BJ (cell line): ENCODE measurements at regions of chr10 and their contacts with region 1.

Region 1: GRCh38 chr10:80144067-80144695 is 11.7 kb downstream of the PLAC9 start:
- DNase-seq: no peak
- H3K4me3 ChIP-seq: no peak overlapping the region
- H3K27me3 ChIP-seq: no peaks in the 10 kb centered on the region
- CTCF ChIP-seq: no peak

Region 2: DNA sequence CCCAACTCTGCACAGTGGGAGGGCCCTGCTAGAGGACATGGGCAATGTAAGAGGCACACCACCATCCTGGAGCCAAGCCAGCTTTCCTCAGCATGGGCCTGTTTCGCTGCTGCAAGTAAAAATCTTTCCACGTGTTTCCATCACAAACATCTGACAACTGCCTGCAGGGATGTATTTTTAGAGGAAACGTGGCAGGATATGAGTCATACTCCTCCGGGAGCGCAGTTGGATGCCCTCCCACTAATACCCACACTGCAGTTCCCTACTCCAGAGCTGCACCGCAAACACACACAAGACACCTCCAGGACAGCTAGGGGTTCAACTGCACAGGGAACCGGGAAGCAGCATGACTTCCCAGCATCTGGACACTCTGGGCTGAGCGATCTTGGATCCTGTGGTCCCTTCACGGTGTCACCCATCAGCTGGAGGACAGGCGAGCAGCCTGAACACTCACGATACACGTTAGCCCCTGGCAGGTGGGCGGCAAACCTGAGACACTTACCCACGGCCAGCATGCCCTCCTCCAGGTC is 14.5 kb after region 1 on chr10:
- CTCF ChIA-PET with region 1: interaction called, 15 read pairs
- POLR2A ChIA-PET with region 1: interaction called, 4 read pairs
- DNase-seq: peak; percentile 97
- H3K4me3 ChIP-seq: no peak overlapping the region
- H3K27me3 ChIP-seq: no peaks in the 10 kb centered on the region
- CTCF ChIP-seq: no peak